Activated CD4-positive, alpha-beta T cell treated with anti-CD3 and anti-CD28 coated beads, Interleukin-2, amount 10 ng/mL, durations not matched to agents 24 days and 14 days (primary cell): ENCODE measurements at regions of chrX and their contacts with region 1.

Region 1: GRCh38 chrX:56382278-56382677 is 150.1 kb downstream of the KLF8 start:
- DNase-seq: peak; percentile 62
- H3K4me3 Mint-ChIP-seq: peak overlapping the region; percentile 54
- H3K27ac Mint-ChIP-seq: peak overlapping the region; percentile 88
- H3K4me1 Mint-ChIP-seq: peaks cover 30% of the 10 kb centered on the region
- H3K27me3 Mint-ChIP-seq: no peaks in the 10 kb centered on the region

Region 2: GRCh38 chrX:56284269-56284668 is 98.0 kb before region 1 on chrX:
- intact Hi-C with region 1: no loop called
- DNase-seq: no peak
- H3K4me3 Mint-ChIP-seq: no peak overlapping the region
- H3K27ac Mint-ChIP-seq: no peak overlapping the region
- H3K4me1 Mint-ChIP-seq: peaks cover 10% of the 10 kb centered on the region
- H3K27me3 Mint-ChIP-seq: no peaks in the 10 kb centered on the region

Region 3: DNA sequence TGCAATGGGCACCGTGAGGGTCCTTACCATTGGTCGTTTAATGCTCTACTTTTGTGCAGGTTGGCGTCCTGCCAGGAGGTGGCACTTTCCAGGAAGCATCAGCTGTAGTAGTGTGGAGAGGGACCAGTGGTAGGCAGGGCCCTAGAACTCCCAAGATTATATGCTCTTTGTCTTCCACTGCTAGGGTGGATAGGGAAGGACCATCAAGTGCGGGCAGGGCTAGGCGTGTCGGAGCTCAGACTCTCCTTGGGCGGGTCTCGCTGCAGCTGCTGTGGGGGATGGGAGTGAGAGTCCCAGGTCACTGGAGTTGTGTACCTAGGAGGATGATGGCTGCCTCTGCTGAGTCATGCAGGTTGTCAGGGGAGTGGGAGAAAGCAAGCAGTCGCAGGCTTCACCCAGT is 15.4 kb before region 1 on chrX:
- intact Hi-C with region 1: loop called (anchors 2 kb)
- DNase-seq: no peak
- H3K4me3 Mint-ChIP-seq: no peak overlapping the region
- H3K27ac Mint-ChIP-seq: peak overlapping the region; percentile 34
- H3K4me1 Mint-ChIP-seq: peaks cover 48% of the 10 kb centered on the region
- H3K27me3 Mint-ChIP-seq: no peaks in the 10 kb centered on the region

Region 4: GRCh38 chrX:56397636-56398035 is 15.4 kb after region 1 on chrX:
- intact Hi-C with region 1: loop called (anchors 2 kb)
- DNase-seq: peak; percentile 71
- H3K4me3 Mint-ChIP-seq: peak overlapping the region; percentile 69
- H3K27ac Mint-ChIP-seq: peak overlapping the region; percentile 79
- H3K4me1 Mint-ChIP-seq: peaks cover 18% of the 10 kb centered on the region
- H3K27me3 Mint-ChIP-seq: no peaks in the 10 kb centered on the region